ENCODE measurements at regions of chr6 and their contacts with region 1.

Region 1: DNA sequence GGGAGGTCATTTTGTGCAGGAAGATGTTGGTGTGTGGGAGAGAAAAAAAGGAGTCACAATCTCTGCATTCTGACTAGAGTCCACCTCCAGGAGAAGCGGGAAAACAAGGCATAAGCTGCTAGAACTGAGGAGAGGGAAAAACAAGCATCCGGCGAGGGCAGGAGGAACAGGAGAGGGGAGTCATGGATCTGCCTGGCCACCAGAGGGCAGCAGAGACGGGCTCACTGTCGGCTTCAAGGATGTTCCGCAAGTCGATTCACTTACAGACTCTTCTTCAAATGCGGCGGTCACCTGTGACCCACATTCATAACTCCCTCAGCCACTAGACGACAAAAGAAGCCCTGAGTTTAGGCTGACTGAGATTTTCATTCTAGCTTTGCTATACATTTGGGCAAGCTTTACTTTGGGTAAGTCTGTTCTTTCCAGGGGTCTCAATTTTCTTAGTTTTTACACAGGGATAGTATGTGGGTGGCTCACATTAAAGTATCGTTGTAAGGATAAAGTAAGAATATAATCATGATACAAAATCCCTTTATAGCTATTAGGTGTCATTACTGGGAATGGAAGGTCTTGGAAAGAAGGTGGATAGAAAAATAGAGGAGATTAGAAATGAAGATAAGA is 6.6 kb upstream of the BTNL2 start:
- DNase-seq: peak; percentile 86 to 91
- H3K4me3 ChIP-seq: no peak overlapping the region
- H3K27ac ChIP-seq: no peak overlapping the region
- H3K4me1 ChIP-seq: no peaks in the 10 kb centered on the region
- H3K27me3 ChIP-seq: peaks cover 0 to 12% (median 1%) of the 10 kb centered on the region in 4 experiments; a peak in 1 of 7 replicates
- CTCF ChIP-seq: peak; percentile 89 to 97 (median 94)
- EP300 ChIP-seq: no peak
- POLR2A ChIP-seq: no peak
- RAD21 ChIP-seq: peak; percentile 91 to 94

Region 2: GRCh38 chr6:32255199-32256153 is 158.1 kb before region 1 on chr6:
- CTCF ChIA-PET with region 1: interaction called, 51 read pairs
- POLR2A ChIA-PET with region 1: no interaction called
- DNase-seq: peak; percentile 62 to 80
- H3K4me3 ChIP-seq: peak overlapping the region; percentile 22 to 69 (median 38); a peak in 7 of 8 replicates
- H3K27ac ChIP-seq: peak overlapping the region; percentile 85
- H3K4me1 ChIP-seq: peaks cover 2 to 5% (median 3%) of the 10 kb centered on the region in 4 experiments; a peak in 4 of 7 replicates
- H3K27me3 ChIP-seq: no peaks in the 10 kb centered on the region
- CTCF ChIP-seq: peak; percentile 63 to 82 (median 75)
- EP300 ChIP-seq: no peak
- POLR2A ChIP-seq: peak; percentile 75 to 83
- RAD21 ChIP-seq: peak; percentile 21 to 54; a peak in 3 of 4 replicates

Region 3: DNA sequence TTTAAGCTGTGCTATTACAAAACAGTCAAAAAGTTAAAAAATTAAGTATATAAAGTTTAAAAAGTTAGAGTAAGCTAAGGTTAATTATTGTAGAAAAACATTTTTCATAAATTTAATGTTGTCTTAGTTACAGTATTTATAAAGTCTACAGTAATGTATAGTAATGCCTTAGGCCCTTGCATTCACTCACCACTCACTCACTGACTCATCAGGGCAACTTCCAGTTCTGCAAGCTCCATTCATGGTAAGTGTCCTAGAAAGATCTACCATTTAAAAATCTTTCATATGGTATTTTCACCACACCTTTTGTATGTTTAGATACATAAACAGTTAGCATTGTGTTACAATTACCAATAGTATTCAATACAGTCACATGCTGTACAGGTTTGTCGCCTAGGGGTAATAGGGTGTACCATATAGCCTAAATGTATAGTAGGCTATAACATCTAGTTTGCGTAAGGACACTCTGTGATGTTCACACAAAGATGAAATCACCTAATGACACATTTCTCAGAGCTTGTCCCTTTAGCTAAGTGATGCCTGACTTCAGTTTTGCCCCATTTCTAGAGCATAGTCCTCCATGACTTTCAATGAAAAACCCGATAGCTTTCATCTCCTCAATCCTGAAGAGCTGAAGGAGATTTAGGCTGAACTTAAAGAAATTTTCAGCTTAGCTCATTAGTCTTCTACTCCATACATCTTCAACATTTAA is 11.2 kb after region 1 on chr6:
- CTCF ChIA-PET with region 1: interaction called, 42 read pairs
- POLR2A ChIA-PET with region 1: no interaction called
- DNase-seq: no peak
- H3K4me3 ChIP-seq: no peak overlapping the region
- H3K27ac ChIP-seq: no peak overlapping the region
- H3K4me1 ChIP-seq: no peaks in the 10 kb centered on the region
- H3K27me3 ChIP-seq: no peaks in the 10 kb centered on the region
- CTCF ChIP-seq: no peak
- EP300 ChIP-seq: no peak
- POLR2A ChIP-seq: no peak
- RAD21 ChIP-seq: no peak

Region 4: DNA sequence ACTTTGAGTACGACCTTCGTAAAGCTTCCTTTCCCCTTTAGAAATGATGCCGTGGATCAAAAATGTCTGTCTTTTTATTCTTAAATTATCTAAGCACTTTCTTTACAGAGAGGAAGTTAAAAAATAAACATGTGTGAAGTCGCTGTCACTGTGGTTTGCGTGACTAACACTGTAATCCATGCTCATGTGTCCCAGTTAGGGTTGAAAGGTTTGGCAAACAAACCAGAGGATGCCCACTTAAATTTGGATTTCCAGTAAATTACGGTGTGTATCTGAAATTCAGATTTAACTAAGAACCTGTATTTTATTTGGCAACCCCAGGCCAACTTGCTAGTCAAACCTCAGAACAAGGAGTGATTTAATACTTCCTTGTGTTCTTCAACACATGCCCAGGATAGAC is 155.0 kb after region 1 on chr6:
- CTCF ChIA-PET with region 1: no interaction called
- POLR2A ChIA-PET with region 1: no interaction called
- DNase-seq: no peak
- H3K4me3 ChIP-seq: no peak overlapping the region
- H3K27ac ChIP-seq: no peak overlapping the region
- H3K4me1 ChIP-seq: no peaks in the 10 kb centered on the region
- H3K27me3 ChIP-seq: no peaks in the 10 kb centered on the region
- CTCF ChIP-seq: no peak
- EP300 ChIP-seq: no peak
- POLR2A ChIP-seq: no peak
- RAD21 ChIP-seq: no peak

Region 5: DNA sequence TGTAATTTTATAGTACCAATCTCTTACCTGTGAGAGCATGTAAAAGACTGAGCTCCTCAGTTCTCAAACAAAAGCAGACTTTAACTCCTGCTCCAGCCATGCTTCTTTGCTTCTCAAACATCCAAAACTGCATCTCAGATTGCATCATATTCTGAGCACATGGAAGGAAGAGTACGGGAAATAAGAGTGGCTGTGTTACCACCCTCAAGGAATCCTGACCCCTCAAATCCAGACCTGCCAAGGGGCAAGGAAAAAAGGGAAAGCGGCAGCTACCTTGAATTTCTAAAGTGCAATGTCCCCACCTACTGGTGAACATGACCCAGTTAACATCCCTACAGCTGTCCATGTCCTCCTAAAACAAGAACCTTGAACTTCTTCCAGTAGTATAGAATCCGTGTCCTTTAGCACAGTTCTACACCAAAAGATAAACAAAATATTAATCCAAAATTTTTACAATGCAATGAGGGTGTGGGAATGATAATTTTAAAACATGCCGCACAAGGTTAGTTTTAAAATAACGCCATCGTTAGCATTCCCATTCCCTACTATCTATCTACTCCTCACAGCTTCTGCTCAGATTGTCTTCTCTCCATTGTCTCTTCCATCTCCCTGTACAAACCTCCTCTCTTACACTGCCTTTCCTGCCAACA is 287.0 kb after region 1 on chr6:
- CTCF ChIA-PET with region 1: interaction called, 28 read pairs
- POLR2A ChIA-PET with region 1: interaction called, 5 read pairs
- DNase-seq: peak; percentile 34 to 53
- H3K4me3 ChIP-seq: no peak overlapping the region
- H3K27ac ChIP-seq: no peak overlapping the region
- H3K4me1 ChIP-seq: no peaks in the 10 kb centered on the region
- H3K27me3 ChIP-seq: no peaks in the 10 kb centered on the region
- CTCF ChIP-seq: peak; percentile 13 to 74 (median 69)
- EP300 ChIP-seq: no peak
- POLR2A ChIP-seq: no peak
- RAD21 ChIP-seq: peak; percentile 88 to 89

Region 6: DNA sequence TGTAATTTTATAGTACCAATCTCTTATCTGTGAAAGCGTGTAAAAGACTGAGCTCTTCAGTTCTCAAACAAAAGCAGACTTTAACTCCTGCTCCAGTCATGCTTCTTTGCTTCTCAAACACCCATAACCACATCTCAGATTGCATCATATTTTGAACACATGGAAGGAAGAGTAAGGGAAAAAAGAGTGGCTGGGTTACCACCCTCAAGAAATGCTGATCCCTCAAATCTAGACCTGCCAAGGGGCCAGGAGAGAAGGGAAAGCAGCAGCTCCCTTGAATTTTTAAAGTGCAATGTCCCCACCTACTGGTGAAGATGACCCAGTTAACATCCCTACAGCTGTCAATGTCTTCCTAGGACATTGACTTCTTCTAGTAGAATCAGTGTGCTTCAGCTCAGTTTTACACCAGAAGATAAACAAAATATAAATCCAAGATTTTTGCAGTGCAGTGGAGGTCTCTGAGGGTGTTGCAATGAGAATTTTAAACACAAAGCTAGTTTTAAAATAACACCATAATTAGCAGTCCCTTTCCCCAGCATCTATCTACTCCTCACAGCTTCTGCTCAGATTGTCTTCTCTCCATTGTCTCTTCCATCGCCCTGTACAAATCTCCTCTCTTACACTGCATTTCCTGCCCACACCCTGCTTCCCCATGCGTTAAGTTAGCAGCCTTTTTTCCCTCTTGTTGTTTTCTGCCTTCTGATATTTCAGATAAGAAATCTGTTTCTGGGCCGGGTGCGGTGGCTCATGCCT is 372.4 kb after region 1 on chr6:
- CTCF ChIA-PET with region 1: interaction called, 54 read pairs
- POLR2A ChIA-PET with region 1: no interaction called
- DNase-seq: peak in 1 of 2 experiments; percentile 49
- H3K4me3 ChIP-seq: no peak overlapping the region
- H3K27ac ChIP-seq: no peak overlapping the region
- H3K4me1 ChIP-seq: no peaks in the 10 kb centered on the region; a peak in 1 of 7 replicates
- H3K27me3 ChIP-seq: no peaks in the 10 kb centered on the region
- CTCF ChIP-seq: peak; percentile 15 to 75 (median 66)
- EP300 ChIP-seq: no peak
- POLR2A ChIP-seq: no peak
- RAD21 ChIP-seq: peak; percentile 86 to 88

Region 7: GRCh38 chr6:33276864-33277662 is 863.5 kb after region 1 on chr6 and contains the start of gene B3GALT4:
- CTCF ChIA-PET with region 1: no interaction called
- POLR2A ChIA-PET with region 1: no interaction called
- DNase-seq: peak; percentile 86 to 89
- H3K4me3 ChIP-seq: peak within 1 kb of the TSS; percentile 52 to 81 (median 59)
- H3K27ac ChIP-seq: peak within 1 kb of the TSS; percentile 55; the same call in 1 of the 2 replicates
- H3K4me1 ChIP-seq: peaks cover 3 to 35% (median 12%) of the 10 kb centered on the region in 4 experiments
- H3K27me3 ChIP-seq: no peaks in the 10 kb centered on the region
- CTCF ChIP-seq: peak in 2 of 3 experiments; percentile 40 to 62; a peak in 2 of 4 replicates
- EP300 ChIP-seq: 0 out of 3 replicates have a peak, but pooled peaks of 1 of the 2 experiments have one; percentile 23
- POLR2A ChIP-seq: peak in 1 of 2 experiments; percentile 93; a peak in 2 of 3 replicates
- RAD21 ChIP-seq: 0 out of 4 replicates have a peak, but pooled peaks of 1 of the 2 experiments have one; percentile 19
- total RNA-seq, gene B3GALT4: 3.0 and 4.2 TPM in 2 replicates

Measured in H1 (cell line).